ENCODE measurements at regions of chr10 and their contacts with region 1.

Region 1: DNA sequence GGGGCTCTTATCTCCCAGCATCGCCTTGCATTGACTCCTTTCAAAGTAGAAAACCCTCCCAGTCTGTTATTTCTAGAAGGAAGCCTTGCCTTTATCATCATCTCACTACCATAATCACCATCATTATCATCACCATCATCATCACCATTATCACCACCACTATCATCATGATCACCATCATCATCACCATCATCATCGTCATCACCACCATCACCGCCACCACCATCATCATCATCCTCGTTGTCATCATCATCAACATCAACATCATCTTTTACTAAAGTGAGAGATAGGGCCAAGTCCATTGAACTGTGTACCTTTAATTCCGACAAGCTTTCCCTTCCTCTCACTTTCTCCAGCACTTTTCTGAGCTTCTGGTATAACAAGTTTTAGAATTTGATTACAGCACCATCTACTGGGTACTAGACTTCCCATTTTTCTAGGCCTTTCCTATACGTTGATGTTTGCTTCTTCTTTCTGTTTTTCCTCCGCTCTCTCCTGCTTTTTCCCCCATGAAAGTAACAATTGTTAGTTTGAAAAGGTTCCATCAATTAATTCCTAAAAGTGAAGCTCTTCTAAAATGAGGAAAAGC is 226.4 kb downstream of the BUB3 start:
- DNase-seq: peak; percentile 15
- ATAC-seq: no peak
- H3K4me3 ChIP-seq: no peak overlapping the region
- H3K27ac ChIP-seq: no peak overlapping the region
- H3K4me1 ChIP-seq: peaks cover 17% of the 10 kb centered on the region
- H3K27me3 ChIP-seq: peaks cover 2 to 4% of the 10 kb centered on the region in 2 experiments; a peak in 2 of 5 replicates
- CTCF ChIP-seq: peak; percentile 46
- EP300 ChIP-seq: no peak
- POLR2A ChIP-seq: no peak
- RAD21 ChIP-seq: no peak

Region 2: DNA sequence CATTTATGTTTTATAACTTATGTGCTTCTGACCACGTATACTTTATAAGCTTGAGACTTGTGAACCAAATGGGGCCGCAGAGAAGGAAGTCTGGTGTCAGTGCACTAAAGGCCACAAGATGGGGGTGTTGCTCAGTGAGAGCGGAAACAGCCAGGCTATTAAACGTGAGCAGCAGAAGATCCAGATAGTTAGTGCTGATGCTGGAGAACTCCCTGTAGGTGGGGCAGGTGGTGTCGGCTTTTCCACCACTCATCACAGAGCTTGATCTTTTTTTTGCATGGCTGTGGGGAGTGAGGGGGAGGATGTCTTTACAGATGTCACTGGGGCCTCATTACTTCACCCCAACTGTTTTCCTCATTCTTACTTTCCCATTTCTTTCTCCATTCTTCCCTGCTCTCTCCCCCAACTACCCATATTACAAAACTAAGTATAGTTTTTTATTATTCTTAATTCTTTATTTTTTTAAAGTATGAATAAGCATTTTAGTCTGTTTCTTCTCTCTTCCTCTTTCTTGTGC is 337.1 kb before region 1 on chr10:
- CTCF ChIA-PET with region 1: interaction called, 3 read pairs
- POLR2A ChIA-PET with region 1: no interaction called
- in situ Hi-C with region 1: loop called (anchors 10 kb)
- intact Hi-C with region 1: loop called (anchors 5 kb)
- DNase-seq: peak; percentile 71
- ATAC-seq: peak; percentile 94
- H3K4me3 ChIP-seq: no peak overlapping the region
- H3K27ac ChIP-seq: no peak overlapping the region
- H3K4me1 ChIP-seq: peaks cover 18% of the 10 kb centered on the region
- H3K27me3 ChIP-seq: no peaks in the 10 kb centered on the region
- CTCF ChIP-seq: peak; percentile 85
- EP300 ChIP-seq: no peak
- POLR2A ChIP-seq: no peak
- RAD21 ChIP-seq: peak; percentile 76

Region 3: GRCh38 chr10:123552760-123553554 is 172.4 kb after region 1 on chr10:
- CTCF ChIA-PET with region 1: no interaction called
- POLR2A ChIA-PET with region 1: no interaction called
- in situ Hi-C with region 1: no loop called
- intact Hi-C with region 1: no loop called
- DNase-seq: no peak
- ATAC-seq: no peak
- H3K4me3 ChIP-seq: no peak overlapping the region
- H3K27ac ChIP-seq: no peak overlapping the region
- H3K4me1 ChIP-seq: no peaks in the 10 kb centered on the region
- H3K27me3 ChIP-seq: peaks cover 2 to 21% of the 10 kb centered on the region in 2 experiments; a peak in 2 of 5 replicates
- CTCF ChIP-seq: no peak
- EP300 ChIP-seq: no peak
- POLR2A ChIP-seq: no peak
- RAD21 ChIP-seq: no peak